ENCODE measurements at regions of chr20 and their contacts with region 1.

Region 1: GRCh38 chr20:45347936-45348778 is at the start of gene SDC4:
- DNase-seq: peak; percentile 69 to 82
- H3K4me3 ChIP-seq: peak within 1 kb of the TSS; percentile 64 to 96 (median 82)
- H3K27ac ChIP-seq: peak within 1 kb of the TSS; percentile 97 to 99
- H3K4me1 ChIP-seq: peaks cover 3 to 13% of the 10 kb centered on the region in 2 donors
- H3K27me3 ChIP-seq: no peaks in the 10 kb centered on the region
- CTCF ChIP-seq: no peak
- POLR2A ChIP-seq: peak; percentile 95
- total RNA-seq, gene SDC4: 29.4 to 337 (median 121) TPM

Region 2: DNA sequence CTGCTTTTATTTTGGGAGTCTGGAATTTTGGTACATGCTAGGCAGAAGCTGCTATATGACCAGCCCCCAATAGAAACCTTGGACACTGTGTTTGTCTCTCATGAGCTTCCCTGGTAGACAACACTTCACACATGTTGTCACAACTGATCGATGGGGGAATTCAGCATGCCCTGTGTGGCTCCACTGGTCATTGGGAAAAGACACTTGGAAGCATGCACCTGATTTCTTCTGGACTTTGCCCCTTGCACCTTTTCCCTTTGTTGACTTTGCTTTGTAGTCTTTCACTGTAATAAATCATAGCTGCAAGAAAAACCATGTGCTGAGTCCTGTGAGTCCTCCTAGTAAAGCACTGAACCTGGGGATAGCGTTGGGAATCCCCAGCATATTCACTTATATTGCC is 273.4 kb after region 1 on chr20:
- intact Hi-C with region 1: no loop called
- DNase-seq: no peak
- H3K4me3 ChIP-seq: no peak overlapping the region
- H3K27ac ChIP-seq: no peak overlapping the region
- H3K4me1 ChIP-seq: no peaks in the 10 kb centered on the region
- H3K27me3 ChIP-seq: no peaks in the 10 kb centered on the region
- CTCF ChIP-seq: no peak
- POLR2A ChIP-seq: no peak

Region 3: DNA sequence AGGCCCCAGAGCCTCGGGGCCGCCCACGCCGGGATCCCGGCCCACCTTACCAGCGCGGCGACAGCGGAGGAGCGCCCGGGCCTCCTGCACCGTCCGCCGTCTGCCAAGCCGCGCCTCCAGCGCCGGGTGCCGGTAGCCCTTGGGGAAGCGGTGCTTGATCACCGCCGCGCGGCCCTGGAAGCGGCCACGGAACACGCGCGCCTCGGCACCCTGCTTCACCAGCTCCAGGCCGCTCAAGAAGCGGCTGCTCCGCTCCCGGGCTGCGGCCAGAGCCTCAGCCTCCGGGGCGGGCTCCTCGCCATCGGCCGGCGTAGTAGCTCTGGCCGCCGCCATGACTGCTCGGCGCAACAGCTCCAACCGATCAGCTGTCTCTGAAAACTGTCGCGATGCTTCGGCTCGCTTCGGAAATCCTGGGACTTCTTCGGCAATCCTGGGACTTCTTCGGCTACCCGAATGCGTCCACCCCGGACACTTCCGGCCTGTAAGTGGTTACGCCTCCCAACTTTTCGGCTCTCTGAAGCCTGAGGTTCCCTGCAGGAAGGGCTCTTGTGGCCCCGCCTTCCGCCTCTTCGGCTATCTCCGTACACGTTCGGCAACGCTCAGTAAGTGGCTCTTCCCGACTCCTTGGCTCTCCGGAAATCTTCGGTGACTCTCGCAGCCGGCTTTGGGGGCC is 1341.1 kb after region 1 on chr20 and contains the start of gene TP53RK:
- intact Hi-C with region 1: loop called (anchors 10 kb)
- DNase-seq: peak; percentile 97 to 99
- H3K4me3 ChIP-seq: peak within 1 kb of the TSS; percentile 69 to 92 (median 83)
- H3K27ac ChIP-seq: peak within 1 kb of the TSS; percentile 95 to 97
- H3K4me1 ChIP-seq: no peaks in the 10 kb centered on the region
- H3K27me3 ChIP-seq: no peaks in the 10 kb centered on the region
- CTCF ChIP-seq: peak in 2 of 3 donors; percentile 71 to 73
- POLR2A ChIP-seq: peak; percentile 59
- total RNA-seq, gene TP53RK: 14.4 to 29.2 (median 27.1) TPM

Region 4: GRCh38 chr20:46715292-46715756 is 1367.2 kb after region 1 on chr20:
- intact Hi-C with region 1: no loop called
- DNase-seq: peak; percentile 79 to 85
- H3K4me3 ChIP-seq: no peak overlapping the region
- H3K27ac ChIP-seq: peak overlapping the region; percentile 64 to 78
- H3K4me1 ChIP-seq: peaks cover 3 to 5% of the 10 kb centered on the region in 2 donors
- H3K27me3 ChIP-seq: no peaks in the 10 kb centered on the region
- CTCF ChIP-seq: peak; percentile 54 to 66 (median 55)
- POLR2A ChIP-seq: no peak

Measured in breast epithelium (tissue), 4 donors.